Tibial artery (tissue), 4 donors: ENCODE measurements at regions of chr18 and their contacts with region 1.

Region 1: GRCh38 chr18:56532176-56532840 is 106.1 kb downstream of the TXNL1 start:
- DNase-seq: no peak
- H3K4me3 ChIP-seq: no peak overlapping the region
- H3K27ac ChIP-seq: no peak overlapping the region
- H3K4me1 ChIP-seq: no peaks in the 10 kb centered on the region
- H3K27me3 ChIP-seq: no peaks in the 10 kb centered on the region
- CTCF ChIP-seq: no peak

Region 2: GRCh38 chr18:56233595-56233994 is 298.7 kb before region 1 on chr18:
- intact Hi-C with region 1: no loop called
- DNase-seq: peak in 1 of 2 donors; percentile 42
- H3K4me3 ChIP-seq: no peak overlapping the region
- H3K27ac ChIP-seq: peak overlapping the region in 1 of 2 donors; percentile 12
- H3K4me1 ChIP-seq: peaks cover 0 to 9% (median 2%) of the 10 kb centered on the region in 4 donors
- H3K27me3 ChIP-seq: no peaks in the 10 kb centered on the region
- CTCF ChIP-seq: no peak

Region 3: DNA sequence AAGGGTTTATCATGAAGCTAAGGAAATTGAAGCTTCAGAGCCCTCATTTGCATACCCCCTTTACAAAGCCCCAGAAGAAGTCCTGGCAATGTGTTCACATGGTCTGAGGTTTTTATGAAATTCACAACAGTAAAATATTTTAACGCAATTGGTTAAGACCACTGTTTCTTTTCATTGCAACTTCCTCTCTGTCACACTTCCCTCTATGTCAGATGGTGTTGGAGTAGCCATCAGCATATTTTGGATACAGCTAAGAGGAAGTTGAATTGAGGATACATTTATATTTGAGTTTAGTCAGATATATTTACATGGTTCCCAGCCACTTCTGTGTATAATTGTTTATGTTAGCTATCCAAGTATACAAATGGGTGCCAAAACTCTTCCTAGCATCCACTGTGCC is 63.9 kb before region 1 on chr18:
- intact Hi-C with region 1: loop called (anchors 2 kb)
- DNase-seq: no peak
- H3K4me3 ChIP-seq: no peak overlapping the region
- H3K27ac ChIP-seq: no peak overlapping the region
- H3K4me1 ChIP-seq: no peaks in the 10 kb centered on the region
- H3K27me3 ChIP-seq: no peaks in the 10 kb centered on the region
- CTCF ChIP-seq: no peak